AG04450 (cell line): ENCODE measurements at regions of chr10 and their contacts with region 1.

Region 1: DNA sequence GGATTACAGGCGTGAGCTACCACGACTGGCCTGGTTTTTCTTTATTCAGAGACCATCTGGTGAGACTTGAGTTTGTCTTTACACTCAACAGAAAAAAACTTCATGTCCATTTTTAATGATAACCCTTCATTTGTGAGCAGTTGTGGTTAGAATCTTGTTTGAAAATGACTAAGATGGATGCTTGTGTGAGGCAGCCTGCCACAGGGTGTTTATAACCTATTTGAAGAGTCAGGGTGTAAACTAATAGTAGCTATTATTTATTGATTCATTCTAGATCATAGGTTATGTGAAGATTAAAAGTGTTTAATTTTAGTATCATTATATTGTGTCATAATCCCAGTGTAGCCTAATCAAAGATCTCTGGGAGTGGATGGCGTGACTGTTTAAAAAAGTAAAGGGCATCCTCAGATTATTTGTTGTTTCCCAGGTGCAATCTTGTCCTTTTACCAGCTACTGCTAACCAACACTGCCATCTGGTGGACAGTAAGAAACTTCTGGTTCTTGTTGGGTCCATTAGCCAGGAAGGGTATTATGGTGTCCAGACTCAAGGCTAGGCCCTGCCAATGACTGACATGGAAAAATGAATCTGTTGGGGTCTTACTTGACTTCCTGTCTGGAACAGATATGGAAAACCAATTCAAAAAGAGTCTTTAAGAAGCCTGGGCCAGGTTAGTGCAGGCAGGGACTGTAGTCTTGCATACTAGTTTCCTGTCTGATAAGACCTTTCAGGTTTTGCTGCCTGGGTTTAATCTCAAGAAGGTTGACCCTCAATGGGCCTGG is 24.9 kb downstream of the NRBF2 start:
- DNase-seq: peak; percentile 86
- H3K4me3 ChIP-seq: no peak overlapping the region
- H3K27ac ChIP-seq: no peak overlapping the region
- H3K27me3 ChIP-seq: no peaks in the 10 kb centered on the region
- CTCF ChIP-seq: peak; percentile 79

Region 2: GRCh38 chr10:62610649-62611229 is 547.3 kb before region 1 on chr10:
- CTCF ChIA-PET with region 1: interaction called, 52 read pairs
- POLR2A ChIA-PET with region 1: no interaction called
- DNase-seq: no peak
- H3K4me3 ChIP-seq: no peak overlapping the region
- H3K27ac ChIP-seq: no peak overlapping the region
- H3K27me3 ChIP-seq: peaks cover 3% of the 10 kb centered on the region
- CTCF ChIP-seq: peak; percentile 83

Region 3: DNA sequence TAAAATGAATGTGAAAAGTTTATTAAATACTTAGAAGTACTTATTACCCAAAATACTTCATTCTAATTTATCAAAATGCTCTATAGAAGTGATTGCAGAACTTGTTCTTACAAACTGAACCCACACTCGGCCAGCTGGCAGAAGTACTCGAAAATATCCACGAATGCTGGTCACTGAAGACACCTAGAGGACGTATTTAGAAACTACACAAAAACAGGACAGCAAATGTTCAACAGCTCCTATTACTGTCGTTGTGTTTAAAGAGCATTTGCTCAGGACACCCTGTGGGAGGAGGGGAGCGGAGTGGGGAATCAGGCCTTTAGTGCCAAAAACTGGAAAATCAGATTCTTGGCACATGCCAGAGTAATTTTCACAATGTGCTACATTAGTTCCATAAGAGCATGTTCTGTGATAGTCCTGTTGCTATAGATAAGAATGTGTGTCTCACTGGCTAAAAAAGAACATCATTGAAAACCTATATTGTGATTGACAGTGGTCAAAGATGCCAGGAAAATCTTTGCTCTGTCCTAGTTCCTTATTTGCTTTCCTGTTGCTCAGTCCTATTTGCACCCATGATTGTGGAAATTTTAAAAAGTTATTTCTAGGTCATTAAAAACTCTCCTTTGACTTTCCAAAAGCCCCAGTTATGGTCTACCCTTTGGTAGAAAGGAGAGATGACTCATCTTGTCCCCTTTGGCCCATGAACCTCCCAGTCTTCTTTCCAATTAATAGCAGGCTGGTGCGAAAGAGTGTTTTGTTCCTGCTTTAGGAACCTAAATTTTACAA is 73.9 kb before region 1 on chr10:
- CTCF ChIA-PET with region 1: interaction called, 14 read pairs
- POLR2A ChIA-PET with region 1: no interaction called
- DNase-seq: peak; percentile 61
- H3K4me3 ChIP-seq: no peak overlapping the region
- H3K27ac ChIP-seq: no peak overlapping the region
- H3K27me3 ChIP-seq: peaks cover 2% of the 10 kb centered on the region
- CTCF ChIP-seq: peak; percentile 70

Region 4: DNA sequence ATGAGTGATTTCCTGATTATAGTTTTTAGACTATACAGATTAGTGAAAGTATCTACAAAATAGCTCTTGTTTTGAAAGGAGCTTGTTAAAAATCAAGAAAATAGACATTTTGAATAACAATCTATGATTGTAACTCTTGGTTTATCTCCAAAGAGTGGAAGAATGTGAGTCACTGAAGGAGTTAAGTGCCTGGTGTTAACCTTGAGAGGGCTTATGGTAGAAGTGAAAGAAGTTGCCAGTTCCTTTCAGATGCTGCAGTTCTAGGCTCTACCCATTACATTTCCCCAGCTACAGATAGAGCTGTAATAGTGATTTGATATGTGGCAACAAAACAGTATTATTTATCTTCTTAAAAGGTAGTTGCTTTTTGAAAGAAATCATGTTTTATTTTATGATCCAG is 12.3 kb before region 1 on chr10:
- CTCF ChIA-PET with region 1: interaction called, 36 read pairs
- POLR2A ChIA-PET with region 1: no interaction called
- DNase-seq: no peak
- H3K4me3 ChIP-seq: no peak overlapping the region
- H3K27ac ChIP-seq: no peak overlapping the region
- H3K27me3 ChIP-seq: no peaks in the 10 kb centered on the region
- CTCF ChIP-seq: no peak

Region 5: GRCh38 chr10:63629363-63630084 is 471.5 kb after region 1 on chr10:
- CTCF ChIA-PET with region 1: interaction called, 171 read pairs
- POLR2A ChIA-PET with region 1: no interaction called
- DNase-seq: peak; percentile 95
- H3K4me3 ChIP-seq: peak overlapping the region; percentile 79
- H3K27ac ChIP-seq: peak overlapping the region; percentile 99
- H3K27me3 ChIP-seq: no peaks in the 10 kb centered on the region
- CTCF ChIP-seq: peak; percentile 89